ENCODE measurements at regions of chr9 and their contacts with region 1.

Region 1: GRCh38 chr9:27505744-27506161 is 18.3 kb upstream of the IFNK start:
- DNase-seq: peak; percentile 65
- H3K4me3 Mint-ChIP-seq: no peak overlapping the region
- H3K27ac Mint-ChIP-seq: peak overlapping the region; percentile 17
- H3K4me1 Mint-ChIP-seq: peaks cover 52% of the 10 kb centered on the region
- H3K27me3 Mint-ChIP-seq: peaks cover 1% of the 10 kb centered on the region

Region 2: GRCh38 chr9:27460226-27461023 is 45.3 kb before region 1 on chr9:
- CTCF ChIA-PET with region 1: no interaction called
- intact Hi-C with region 1: loop called (anchors 1 kb)
- DNase-seq: peak; percentile 40
- H3K4me3 Mint-ChIP-seq: no peak overlapping the region
- H3K27ac Mint-ChIP-seq: no peak overlapping the region
- H3K4me1 Mint-ChIP-seq: peaks cover 19% of the 10 kb centered on the region
- H3K27me3 Mint-ChIP-seq: no peaks in the 10 kb centered on the region

Region 3: DNA sequence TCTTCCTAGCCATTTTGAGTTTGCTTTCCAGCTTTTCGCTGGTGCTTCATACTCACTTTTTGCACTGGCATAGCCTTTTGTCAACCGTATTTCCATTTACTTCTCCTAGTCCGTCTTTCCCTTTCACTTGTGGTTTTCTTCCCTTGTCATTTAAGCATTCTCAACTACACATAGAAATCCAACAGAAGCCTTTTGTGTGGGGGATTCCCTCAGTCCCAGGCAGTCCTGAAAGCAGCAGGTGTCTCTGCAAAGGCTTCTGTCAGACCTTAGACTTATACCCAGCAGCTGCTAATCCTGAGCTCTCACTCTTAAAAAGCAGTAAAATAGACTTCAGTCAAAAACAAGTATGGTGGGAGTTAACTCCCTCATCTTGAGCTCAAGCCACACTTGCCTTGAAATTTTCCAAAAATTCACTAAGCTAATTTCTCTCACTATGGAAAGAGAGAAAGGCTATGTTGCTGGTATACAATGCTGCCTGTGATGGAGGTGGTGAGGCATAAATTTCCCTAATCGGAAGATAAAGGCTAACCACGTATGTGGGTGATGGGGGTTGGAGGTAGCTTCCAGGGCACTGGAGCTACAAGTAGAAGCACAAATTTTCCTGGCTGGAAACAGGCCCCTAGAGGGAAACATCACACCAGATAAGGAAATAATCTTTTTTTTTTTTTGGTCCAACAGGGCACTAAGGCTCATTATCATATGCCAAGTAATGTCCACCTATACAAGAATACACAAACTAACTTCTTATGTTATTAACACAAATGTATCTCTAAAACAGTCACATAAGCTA is 16.5 kb before region 1 on chr9:
- CTCF ChIA-PET with region 1: no interaction called
- intact Hi-C with region 1: loop called (anchors 2 kb)
- DNase-seq: peak; percentile 20
- H3K4me3 Mint-ChIP-seq: no peak overlapping the region
- H3K27ac Mint-ChIP-seq: no peak overlapping the region
- H3K4me1 Mint-ChIP-seq: peaks cover 25% of the 10 kb centered on the region
- H3K27me3 Mint-ChIP-seq: no peaks in the 10 kb centered on the region

Region 4: GRCh38 chr9:27524236-27524635 is 18.5 kb after region 1 on chr9 and contains the start of gene IFNK:
- CTCF ChIA-PET with region 1: interaction called, 7 read pairs
- intact Hi-C with region 1: loop called (anchors 1 kb)
- DNase-seq: no peak
- H3K4me3 Mint-ChIP-seq: no peak within 1 kb of the TSS
- H3K27ac Mint-ChIP-seq: peak within 1 kb of the TSS; percentile 57
- H3K4me1 Mint-ChIP-seq: peaks cover 14% of the 10 kb centered on the region
- H3K27me3 Mint-ChIP-seq: peaks cover 8% of the 10 kb centered on the region
- total RNA-seq, gene IFNK: 0.24 TPM in 1 of 2 experiments, not detected in the other

Region 5: GRCh38 chr9:27529316-27530278 is 23.8 kb after region 1 on chr9 and contains the start of gene MOB3B:
- CTCF ChIA-PET with region 1: interaction called, 7 read pairs
- intact Hi-C with region 1: loop called (anchors 1 kb)
- DNase-seq: peak; percentile 80
- H3K4me3 Mint-ChIP-seq: peak within 1 kb of the TSS; percentile 86
- H3K27ac Mint-ChIP-seq: peak within 1 kb of the TSS; percentile 86
- H3K4me1 Mint-ChIP-seq: peaks cover 10% of the 10 kb centered on the region
- H3K27me3 Mint-ChIP-seq: peaks cover 8% of the 10 kb centered on the region
- total RNA-seq, gene MOB3B: 3.0 to 3.2 TPM